ENCODE measurements at regions of chr13 and their contacts with region 1.

Region 1: GRCh38 chr13:33017323-33017929 is 1.2 kb downstream of the KL start:
- DNase-seq: peak in 1 of 2 experiments; percentile 17
- H3K4me3 ChIP-seq: no peak overlapping the region
- H3K27ac ChIP-seq: no peak overlapping the region
- H3K4me1 ChIP-seq: peaks cover 17% of the 10 kb centered on the region; the same call in 1 of the 2 replicates
- H3K27me3 ChIP-seq: no peaks in the 10 kb centered on the region
- CTCF ChIP-seq: no peak

Region 2: GRCh38 chr13:32695602-32696250 is 321.7 kb before region 1 on chr13:
- CTCF ChIA-PET with region 1: no interaction called
- POLR2A ChIA-PET with region 1: no interaction called
- intact Hi-C with region 1: loop called (anchors 10 kb)
- DNase-seq: no peak
- H3K4me3 ChIP-seq: no peak overlapping the region
- H3K27ac ChIP-seq: peak overlapping the region; percentile 8; the same call in 1 of the 2 replicates
- H3K4me1 ChIP-seq: no peaks in the 10 kb centered on the region
- H3K27me3 ChIP-seq: no peaks in the 10 kb centered on the region
- CTCF ChIP-seq: no peak

Region 3: DNA sequence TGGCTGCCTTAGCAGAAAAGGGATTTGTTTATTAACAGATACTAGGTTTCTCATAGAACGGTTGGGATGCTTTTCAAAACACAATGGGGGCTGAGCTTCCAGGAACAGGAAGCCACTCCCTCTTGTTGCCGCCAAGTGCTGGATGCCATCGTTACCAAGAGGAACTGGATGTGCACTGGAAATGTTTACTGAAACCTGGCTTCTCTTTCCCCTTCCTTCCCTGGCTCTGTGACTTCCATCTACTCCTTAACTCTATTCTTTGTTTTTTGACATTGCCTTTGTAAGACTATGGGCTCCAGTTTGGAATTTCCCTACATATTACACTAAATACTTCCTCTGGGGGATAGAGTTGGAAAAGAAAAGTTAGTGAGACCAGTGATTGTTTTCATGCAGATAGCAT is 12.9 kb before region 1 on chr13:
- CTCF ChIA-PET with region 1: no interaction called
- POLR2A ChIA-PET with region 1: no interaction called
- intact Hi-C with region 1: no loop called
- DNase-seq: no peak
- H3K4me3 ChIP-seq: no peak overlapping the region
- H3K27ac ChIP-seq: no peak overlapping the region
- H3K4me1 ChIP-seq: no peaks in the 10 kb centered on the region
- H3K27me3 ChIP-seq: no peaks in the 10 kb centered on the region
- CTCF ChIP-seq: no peak

Region 4: DNA sequence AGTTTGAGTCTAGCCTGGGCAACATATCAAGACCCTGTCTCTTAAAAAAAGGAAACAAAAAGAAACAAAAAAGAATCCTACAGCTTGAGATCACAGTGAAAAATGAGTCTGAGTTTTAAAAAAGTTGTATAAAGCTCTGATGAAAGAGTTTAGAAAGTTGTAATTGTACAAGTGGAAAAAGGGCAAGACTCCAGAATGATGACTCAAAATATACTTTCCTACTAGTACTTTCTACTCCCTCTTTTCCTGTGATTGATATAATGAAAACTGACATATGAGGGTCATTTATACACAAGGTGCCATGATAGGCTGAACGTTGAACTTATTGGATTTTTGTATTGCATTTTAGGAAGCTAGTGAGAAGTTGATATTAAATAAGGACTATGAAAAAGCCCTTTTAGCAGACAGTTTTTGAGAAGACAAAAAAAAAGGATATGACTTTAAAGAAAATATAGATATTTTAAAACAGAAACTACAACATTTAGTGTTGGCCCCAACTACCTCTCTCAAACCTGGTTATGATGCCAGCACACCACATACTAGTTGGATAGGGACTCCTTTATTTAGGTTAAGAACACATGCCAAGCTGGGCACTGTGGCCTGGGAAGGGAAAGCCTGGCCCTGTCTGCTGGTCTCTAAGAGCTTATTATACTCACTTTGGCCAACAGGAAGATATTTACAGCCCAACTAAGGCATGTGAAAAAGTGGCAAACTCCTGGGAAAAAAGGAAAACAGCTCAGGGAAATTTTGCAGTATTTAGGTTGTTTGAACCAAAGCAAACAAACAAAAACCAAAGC is 115.4 kb after region 1 on chr13:
- CTCF ChIA-PET with region 1: no interaction called
- POLR2A ChIA-PET with region 1: no interaction called
- intact Hi-C with region 1: loop called (anchors 5 kb)
- DNase-seq: no peak
- H3K4me3 ChIP-seq: no peak overlapping the region
- H3K27ac ChIP-seq: no peak overlapping the region
- H3K4me1 ChIP-seq: peaks cover 10% of the 10 kb centered on the region
- H3K27me3 ChIP-seq: no peaks in the 10 kb centered on the region
- CTCF ChIP-seq: no peak

Region 5: DNA sequence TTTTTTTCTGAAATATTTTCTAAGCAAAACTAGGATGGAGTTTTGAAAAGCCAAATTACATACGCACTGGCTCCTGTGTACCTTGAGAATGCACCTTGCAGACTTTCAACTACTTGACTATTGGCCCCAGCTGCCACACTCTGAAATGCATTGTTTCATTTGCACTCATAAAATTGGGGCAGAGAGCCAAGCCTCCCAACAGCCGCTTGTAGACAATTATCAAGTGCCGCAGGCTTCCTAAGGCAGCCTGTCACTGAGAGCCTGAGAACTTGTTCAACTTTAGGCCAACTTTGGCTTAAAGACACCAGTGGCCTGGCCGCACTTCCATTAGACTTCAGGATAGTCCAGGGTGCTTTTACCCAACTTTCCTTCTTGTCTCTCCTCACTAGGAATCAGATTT is 383.8 kb after region 1 on chr13:
- CTCF ChIA-PET with region 1: no interaction called
- POLR2A ChIA-PET with region 1: no interaction called
- intact Hi-C with region 1: no loop called
- DNase-seq: no peak
- H3K4me3 ChIP-seq: no peak overlapping the region
- H3K27ac ChIP-seq: no peak overlapping the region
- H3K4me1 ChIP-seq: no peaks in the 10 kb centered on the region
- H3K27me3 ChIP-seq: no peaks in the 10 kb centered on the region
- CTCF ChIP-seq: no peak